ENCODE measurements at regions of chr1 and their contacts with region 1.

Region 1: DNA sequence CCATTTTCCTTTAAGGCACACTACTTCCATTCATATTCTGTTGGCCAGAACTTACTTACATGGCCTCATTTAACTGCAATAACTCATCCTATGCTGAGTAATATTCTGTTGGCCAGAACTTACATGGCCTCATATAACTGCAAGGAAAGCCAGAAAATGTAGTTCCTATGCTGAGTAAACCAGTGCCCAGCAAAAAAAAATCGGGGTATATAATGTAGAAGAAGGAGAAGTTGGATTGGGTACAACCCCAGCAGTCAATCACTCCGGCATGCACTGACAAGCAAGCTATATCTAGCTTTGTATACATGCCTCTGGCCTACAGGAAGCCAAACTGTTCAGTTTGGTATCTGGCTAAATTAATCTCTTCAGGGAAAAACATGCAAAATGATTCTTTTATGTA is 39.4 kb upstream of the PPIH start:
- DNase-seq: no peak
- ATAC-seq: no peak
- H3K4me3 ChIP-seq: no peak overlapping the region
- H3K27ac ChIP-seq: no peak overlapping the region
- H3K4me1 ChIP-seq: no peaks in the 10 kb centered on the region
- H3K27me3 ChIP-seq: no peaks in the 10 kb centered on the region
- CTCF ChIP-seq: no peak
- POLR2A ChIP-seq: no peak

Region 2: GRCh38 chr1:42504535-42505128 is 114.2 kb before region 1 on chr1:
- intact Hi-C with region 1: loop called (anchors 10 kb)
- DNase-seq: no peak
- ATAC-seq: no peak
- H3K4me3 ChIP-seq: no peak overlapping the region
- H3K27ac ChIP-seq: no peak overlapping the region
- H3K4me1 ChIP-seq: no peaks in the 10 kb centered on the region
- H3K27me3 ChIP-seq: no peaks in the 10 kb centered on the region
- CTCF ChIP-seq: no peak
- POLR2A ChIP-seq: no peak